IMR-90 (cell line): ENCODE measurements at regions of chr1 and their contacts with region 1.

Region 1: DNA sequence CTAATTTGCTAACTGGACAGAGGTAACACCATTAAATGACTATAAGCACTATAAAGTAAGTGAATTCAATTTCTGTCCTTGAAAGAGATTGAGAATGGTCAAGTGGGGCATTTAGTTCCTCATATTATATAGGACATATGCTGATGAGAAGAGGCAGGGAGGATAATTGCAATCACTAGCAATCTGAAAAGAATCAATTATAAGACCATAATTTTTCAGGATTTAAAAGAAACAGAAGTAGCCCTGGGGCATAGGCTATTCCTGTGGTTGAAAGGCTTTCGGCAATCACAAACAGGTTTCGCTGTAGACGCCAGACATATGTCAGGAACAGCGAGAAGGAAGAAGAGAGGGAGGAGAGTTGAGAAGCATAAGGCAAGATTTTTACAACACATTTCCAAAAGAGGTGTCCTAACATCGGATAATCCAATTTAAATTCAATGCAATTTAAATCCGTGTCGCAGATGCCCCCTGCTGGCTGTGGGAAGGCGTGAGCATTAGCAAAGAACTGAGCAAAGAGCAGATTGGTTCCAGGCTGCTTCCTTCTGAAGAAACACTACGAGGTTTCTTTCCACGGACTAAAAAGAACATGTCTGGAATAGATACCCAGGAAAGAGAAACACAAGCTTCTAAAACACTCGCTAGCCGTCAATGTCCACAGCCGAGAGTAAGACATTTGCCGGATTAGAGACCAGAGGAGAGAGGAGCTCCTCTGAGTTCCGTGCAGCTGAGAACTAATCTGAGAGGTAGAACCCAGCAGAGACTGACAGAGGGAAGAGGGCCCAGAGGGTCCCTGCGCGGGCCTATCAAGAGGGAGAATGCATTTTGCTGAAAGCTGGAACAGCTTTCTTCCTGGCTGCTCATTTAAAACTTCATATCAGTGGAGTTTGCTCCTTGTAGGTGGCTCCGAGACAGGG is 27.9 kb downstream of the RGS5 start:
- DNase-seq: peak; percentile 65
- ATAC-seq: peak; percentile 74
- H3K4me3 ChIP-seq: no peak overlapping the region
- H3K27ac ChIP-seq: no peak overlapping the region
- H3K4me1 ChIP-seq: peaks cover 10% of the 10 kb centered on the region
- H3K27me3 ChIP-seq: no peaks in the 10 kb centered on the region
- CTCF ChIP-seq: peak; percentile 94
- POLR2A ChIP-seq: no peak
- RAD21 ChIP-seq: peak; percentile 89

Region 2: GRCh38 chr1:162612606-162613400 is 562.0 kb before region 1 on chr1:
- CTCF ChIA-PET with region 1: no interaction called
- POLR2A ChIA-PET with region 1: no interaction called
- dilution Hi-C with region 1: no loop called
- in situ Hi-C with region 1: no loop called
- intact Hi-C with region 1: loop called (anchors 10 kb)
- DNase-seq: peak; percentile 34
- ATAC-seq: peak; percentile 36
- H3K4me3 ChIP-seq: no peak overlapping the region
- H3K27ac ChIP-seq: no peak overlapping the region
- H3K4me1 ChIP-seq: peaks cover 3% of the 10 kb centered on the region; the same call in 1 of the 2 replicates
- H3K27me3 ChIP-seq: no peaks in the 10 kb centered on the region
- CTCF ChIP-seq: no peak
- POLR2A ChIP-seq: no peak; the same call in none of the 2 replicates
- RAD21 ChIP-seq: no peak

Region 3: DNA sequence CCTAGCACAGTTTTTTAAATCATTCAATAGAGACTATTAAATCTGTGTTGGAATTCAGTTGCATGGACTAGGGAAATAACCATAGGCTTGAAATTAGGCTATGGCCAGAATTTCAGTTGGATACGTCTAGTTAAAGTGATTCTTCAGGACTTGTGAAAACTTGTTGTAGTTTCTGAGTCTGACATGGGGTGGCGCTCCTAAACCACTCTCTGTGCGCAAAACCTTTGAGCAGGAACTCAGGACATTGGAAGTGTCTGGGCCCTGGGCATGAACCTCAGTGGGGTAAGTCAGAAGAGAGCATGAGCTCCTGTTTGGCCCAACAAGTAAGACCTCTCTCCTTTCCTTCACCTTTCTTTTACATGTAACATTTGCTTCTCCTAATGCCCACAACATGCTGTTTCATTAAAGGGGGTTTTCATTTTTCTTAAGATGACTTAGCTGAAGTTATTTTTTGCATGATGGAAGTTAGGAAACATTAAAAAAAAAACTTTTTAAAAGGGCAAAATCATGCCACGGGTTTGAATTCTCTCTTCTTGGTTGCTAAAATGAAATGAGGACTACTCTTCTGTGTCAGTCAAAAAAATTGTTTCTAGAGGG is 296.7 kb before region 1 on chr1:
- CTCF ChIA-PET with region 1: interaction called, 8 read pairs
- POLR2A ChIA-PET with region 1: no interaction called
- dilution Hi-C with region 1: no loop called
- in situ Hi-C with region 1: no loop called
- intact Hi-C with region 1: loop called (anchors 1 kb)
- DNase-seq: peak; percentile 80
- ATAC-seq: peak; percentile 85
- H3K4me3 ChIP-seq: no peak overlapping the region
- H3K27ac ChIP-seq: no peak overlapping the region
- H3K4me1 ChIP-seq: peaks cover 2% of the 10 kb centered on the region; the same call in 1 of the 2 replicates
- H3K27me3 ChIP-seq: no peaks in the 10 kb centered on the region
- CTCF ChIP-seq: peak; percentile 95
- POLR2A ChIP-seq: peak; percentile 40; the same call in 1 of the 2 replicates
- RAD21 ChIP-seq: peak; percentile 100